MCF 10A (cell line): ENCODE measurements at regions of chr1 and their contacts with region 1.

Region 1: GRCh38 chr1:13960375-13960987 is 260.5 kb downstream of the PRDM2 start:
- DNase-seq: peak; percentile 79
- H3K4me3 Mint-ChIP-seq: no peak overlapping the region
- H3K27ac Mint-ChIP-seq: no peak overlapping the region
- H3K4me1 Mint-ChIP-seq: peaks cover 14% of the 10 kb centered on the region
- H3K27me3 Mint-ChIP-seq: no peaks in the 10 kb centered on the region
- CTCF ChIP-seq: peak; percentile 93

Region 2: GRCh38 chr1:13469343-13469742 is 491.1 kb before region 1 on chr1:
- CTCF ChIA-PET with region 1: no interaction called
- POLR2A ChIA-PET with region 1: no interaction called
- intact Hi-C with region 1: loop called (anchors 2 kb)
- DNase-seq: peak; percentile 55
- H3K4me3 Mint-ChIP-seq: no peak overlapping the region
- H3K27ac Mint-ChIP-seq: no peak overlapping the region
- H3K4me1 Mint-ChIP-seq: no peaks in the 10 kb centered on the region
- H3K27me3 Mint-ChIP-seq: no peaks in the 10 kb centered on the region
- CTCF ChIP-seq: peak; percentile 46

Region 3: DNA sequence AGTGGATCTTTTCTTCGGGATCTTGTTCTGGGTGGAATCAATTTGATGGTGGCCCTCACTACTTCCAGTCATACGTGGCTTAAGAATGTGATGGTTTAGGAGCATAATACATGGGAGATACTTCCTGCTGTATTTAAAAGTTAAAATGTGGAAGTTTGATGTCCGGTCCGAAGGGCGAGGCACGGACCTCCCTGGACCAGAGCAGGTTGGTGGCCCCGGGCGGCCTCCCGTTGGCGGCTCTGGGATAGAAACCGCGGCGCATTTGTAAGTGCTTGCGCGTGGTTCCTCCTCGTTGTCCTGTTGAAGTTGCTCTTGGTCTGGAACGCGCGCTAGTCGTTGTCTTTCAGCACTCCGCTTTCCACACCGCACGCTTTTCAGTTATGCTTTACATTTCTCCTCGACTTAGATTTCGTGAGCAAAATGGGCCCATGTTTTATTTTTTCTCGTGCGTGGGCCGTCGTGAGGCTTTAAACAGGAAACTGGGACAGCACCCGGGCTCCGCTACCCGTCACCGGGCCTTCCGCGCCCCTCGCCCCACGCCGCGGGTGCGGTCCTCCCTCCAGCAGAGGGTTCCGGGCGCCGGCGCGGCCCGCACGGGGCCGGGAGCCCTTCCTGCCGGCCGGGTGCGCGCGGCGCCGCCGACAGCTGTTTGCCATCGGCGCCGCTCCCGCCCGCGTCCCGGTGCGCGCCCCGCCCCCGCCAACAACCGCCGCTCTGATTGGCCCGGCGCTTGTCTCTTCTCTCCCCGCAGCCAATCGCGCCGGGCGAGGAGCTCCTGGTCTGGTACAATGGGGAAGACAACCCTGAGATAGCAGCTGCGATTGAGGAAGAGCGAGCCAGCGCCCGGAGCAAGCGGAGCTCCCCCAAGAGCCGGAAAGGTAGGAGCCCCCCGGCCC is 211.6 kb before region 1 on chr1:
- CTCF ChIA-PET with region 1: no interaction called
- POLR2A ChIA-PET with region 1: no interaction called
- intact Hi-C with region 1: loop called (anchors 1 kb)
- DNase-seq: peak; percentile 97
- H3K4me3 Mint-ChIP-seq: peak overlapping the region; percentile 91
- H3K27ac Mint-ChIP-seq: peak overlapping the region; percentile 91
- H3K4me1 Mint-ChIP-seq: peaks cover 35% of the 10 kb centered on the region
- H3K27me3 Mint-ChIP-seq: no peaks in the 10 kb centered on the region
- CTCF ChIP-seq: no peak

Region 4: DNA sequence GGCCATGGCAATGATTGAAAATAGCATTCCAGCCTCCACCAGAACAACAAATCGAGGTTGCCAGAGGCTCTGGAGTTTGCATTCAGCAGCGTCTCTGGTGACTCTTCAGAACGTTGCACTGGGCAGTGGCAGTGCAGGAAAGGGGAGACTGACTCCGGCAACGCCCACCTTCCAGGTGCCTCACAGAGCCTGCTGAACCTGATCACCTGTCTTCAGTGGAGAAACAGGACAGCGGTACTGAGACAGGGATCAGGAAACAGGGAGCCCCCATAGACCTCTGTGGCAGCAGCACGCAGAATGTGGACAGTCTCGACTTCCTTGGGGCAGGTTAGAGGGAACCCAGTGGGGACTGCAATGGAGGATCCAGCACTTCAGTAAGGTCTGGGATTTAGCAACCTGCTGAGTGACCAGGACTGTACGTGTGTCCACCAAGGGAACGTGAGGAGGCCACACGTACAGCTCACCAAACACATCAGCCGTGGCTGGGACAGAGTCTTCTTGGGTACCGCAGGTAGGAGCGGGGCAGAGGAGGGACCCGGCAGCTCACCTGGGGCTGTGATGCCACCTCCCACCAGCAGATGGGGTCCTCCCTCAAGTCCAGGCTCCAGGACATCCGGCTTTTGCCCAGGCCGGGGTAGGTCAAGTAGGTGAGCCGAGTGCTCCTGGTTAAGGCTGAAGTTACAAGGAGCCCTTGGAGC is 131.9 kb before region 1 on chr1:
- CTCF ChIA-PET with region 1: interaction called, 9 read pairs
- POLR2A ChIA-PET with region 1: interaction called, 3 read pairs
- intact Hi-C with region 1: loop called (anchors 1 kb)
- DNase-seq: peak; percentile 51
- H3K4me3 Mint-ChIP-seq: no peak overlapping the region
- H3K27ac Mint-ChIP-seq: peak overlapping the region; percentile 31
- H3K4me1 Mint-ChIP-seq: peaks cover 11% of the 10 kb centered on the region
- H3K27me3 Mint-ChIP-seq: no peaks in the 10 kb centered on the region
- CTCF ChIP-seq: peak; percentile 66

Region 5: GRCh38 chr1:13930151-13930550 is 30.3 kb before region 1 on chr1:
- CTCF ChIA-PET with region 1: interaction called, 5 read pairs
- POLR2A ChIA-PET with region 1: interaction called, 4 read pairs
- intact Hi-C with region 1: loop called (anchors 1 kb)
- DNase-seq: peak; percentile 31
- H3K4me3 Mint-ChIP-seq: no peak overlapping the region
- H3K27ac Mint-ChIP-seq: peak overlapping the region; percentile 39
- H3K4me1 Mint-ChIP-seq: peaks cover 19% of the 10 kb centered on the region
- H3K27me3 Mint-ChIP-seq: no peaks in the 10 kb centered on the region
- CTCF ChIP-seq: peak; percentile 25